K562 (cell line): ENCODE measurements at regions of chr11 and their contacts with region 1.

Region 1: DNA sequence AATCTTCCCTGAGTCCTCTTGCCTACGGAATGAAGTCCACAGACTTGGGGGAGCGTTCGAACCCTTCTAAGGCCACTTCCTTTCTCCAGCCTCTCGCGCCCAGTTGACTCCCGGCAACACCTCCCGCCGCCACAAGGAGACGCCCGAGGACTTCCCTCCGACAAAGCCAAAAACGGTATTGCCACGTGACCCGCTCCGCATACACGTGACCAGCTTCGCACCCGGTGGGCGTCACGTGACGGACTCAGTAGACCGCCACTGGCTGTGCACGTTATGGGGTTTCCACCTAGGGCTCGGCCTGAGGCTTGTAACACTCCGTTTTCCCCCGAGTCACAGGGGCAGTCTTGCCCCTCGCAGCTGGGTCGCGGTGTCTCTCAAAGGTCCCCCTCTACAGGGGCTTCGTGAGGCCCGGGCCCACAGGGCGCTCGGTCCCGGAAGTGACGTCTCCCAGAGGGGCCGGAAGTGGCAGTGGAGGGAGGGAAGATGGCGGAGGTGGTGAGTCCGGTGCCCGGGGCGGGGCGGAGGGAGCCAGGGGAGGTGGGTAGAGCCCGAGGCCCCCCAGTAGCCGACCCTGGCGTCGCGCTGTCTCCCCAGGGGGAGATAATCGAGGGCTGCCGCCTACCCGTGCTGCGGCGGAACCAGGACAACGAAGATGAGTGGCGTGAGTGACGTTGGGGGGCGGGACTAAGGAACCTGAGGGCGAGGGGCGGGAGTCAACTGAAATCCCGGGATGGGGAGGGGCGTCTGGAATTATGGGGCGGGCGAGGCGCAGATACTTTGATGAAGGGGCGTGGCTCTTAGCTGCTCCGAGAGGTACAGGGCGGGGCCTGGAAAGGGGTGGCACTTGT is at the start of gene KAT5:
- DNase-seq: peak; percentile 93 to 99 (median 95)
- ATAC-seq: peak; percentile 93
- H3K4me3 ChIP-seq: peak within 1 kb of the TSS; percentile 59
- H3K27ac ChIP-seq: peak within 1 kb of the TSS; percentile 98
- H3K4me1 ChIP-seq: peaks cover 17 to 28% of the 10 kb centered on the region in 2 experiments
- H3K27me3 ChIP-seq: no peaks in the 10 kb centered on the region
- CTCF ChIP-seq: peak; percentile 97 to 99 (median 98)
- EP300 ChIP-seq: 0 out of 2 replicates have a peak, but pooled peaks have one; percentile 34
- POLR2A ChIP-seq: peak; percentile 93
- RAD21 ChIP-seq: peak; percentile 96 to 97
- polyA plus RNA-seq, gene KAT5: 3.6 to 12.9 TPM

Region 2: DNA sequence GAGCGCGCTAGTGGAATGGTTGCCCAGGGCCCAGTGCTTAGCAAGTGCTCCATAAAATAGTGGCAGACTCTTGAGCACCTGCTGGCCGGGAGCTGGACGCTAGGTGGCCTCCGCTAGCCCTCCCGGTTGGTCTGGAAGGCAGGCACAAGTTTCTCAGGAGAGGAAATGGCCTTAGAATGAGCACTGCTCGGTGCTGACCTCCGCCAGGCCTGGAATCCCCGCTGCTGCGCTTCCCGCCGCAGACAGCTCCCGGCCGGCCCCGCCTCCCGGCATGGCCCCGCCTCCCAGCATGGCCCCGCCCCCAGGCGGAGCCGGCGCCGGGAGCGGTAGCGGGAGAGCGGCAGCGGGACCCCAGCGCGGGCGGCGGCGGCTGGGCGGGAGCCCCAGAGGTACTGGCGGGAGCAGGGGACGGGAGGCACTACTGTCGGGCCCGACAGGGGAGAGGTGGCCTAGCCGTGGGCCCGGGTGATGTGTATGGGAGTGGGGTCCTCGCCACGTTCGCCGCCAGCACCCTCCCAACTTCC is 74.2 kb before region 1 on chr11 and contains the start of gene SIPA1:
- CTCF ChIA-PET with region 1: no interaction called
- POLR2A ChIA-PET with region 1: interaction called, 6 read pairs
- in situ Hi-C with region 1: no loop called
- intact Hi-C with region 1: loop called (anchors 5 kb)
- DNase-seq: peak; percentile 84 to 93 (median 87)
- ATAC-seq: peak; percentile 87
- H3K4me3 ChIP-seq: peak within 1 kb of the TSS; percentile 85
- H3K27ac ChIP-seq: peak within 1 kb of the TSS; percentile 93
- H3K4me1 ChIP-seq: peaks cover 32 to 95% of the 10 kb centered on the region in 2 experiments
- H3K27me3 ChIP-seq: no peaks in the 10 kb centered on the region
- CTCF ChIP-seq: peak; percentile 69 to 74 (median 71)
- EP300 ChIP-seq: 0 out of 2 replicates have a peak, but pooled peaks have one; percentile 5
- POLR2A ChIP-seq: peak; percentile 84; the same call in 1 of the 2 replicates
- RAD21 ChIP-seq: peak; percentile 19 to 67
- polyA plus RNA-seq, gene SIPA1: 0.25 to 1.4 TPM

Region 3: DNA sequence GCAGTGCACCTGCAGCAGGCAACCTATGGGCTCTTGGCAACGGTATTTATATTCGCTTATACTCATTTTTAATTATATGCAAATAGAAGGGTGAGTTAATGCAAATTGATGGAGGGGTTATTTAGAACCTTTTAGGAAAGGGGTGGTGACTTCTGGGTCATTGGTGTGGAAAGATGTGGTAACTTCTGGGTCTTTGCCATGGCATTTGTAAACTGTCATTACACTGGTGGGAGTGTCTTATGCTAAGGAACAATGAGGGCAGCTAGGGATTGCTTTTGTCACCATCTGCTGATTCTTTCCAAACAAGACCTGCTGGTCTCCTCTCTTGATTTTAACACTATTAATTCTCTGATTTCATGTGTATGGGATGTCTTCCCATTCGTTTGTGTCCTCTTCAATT is 11.6 kb before region 1 on chr11:
- CTCF ChIA-PET with region 1: no interaction called
- POLR2A ChIA-PET with region 1: no interaction called
- in situ Hi-C with region 1: no loop called
- intact Hi-C with region 1: no loop called
- DNase-seq: no peak
- ATAC-seq: no peak
- H3K4me3 ChIP-seq: no peak overlapping the region
- H3K27ac ChIP-seq: no peak overlapping the region
- H3K4me1 ChIP-seq: peaks cover 0 to 10% of the 10 kb centered on the region in 2 experiments; a peak in 2 of 5 replicates
- H3K27me3 ChIP-seq: peaks cover 0 to 2% of the 10 kb centered on the region in 2 experiments; a peak in 2 of 5 replicates
- CTCF ChIP-seq: peak in 1 of 3 experiments; percentile 11; a peak in 1 of 6 replicates
- EP300 ChIP-seq: no peak
- POLR2A ChIP-seq: no peak
- RAD21 ChIP-seq: no peak; a peak in 1 of 4 replicates

Region 4: DNA sequence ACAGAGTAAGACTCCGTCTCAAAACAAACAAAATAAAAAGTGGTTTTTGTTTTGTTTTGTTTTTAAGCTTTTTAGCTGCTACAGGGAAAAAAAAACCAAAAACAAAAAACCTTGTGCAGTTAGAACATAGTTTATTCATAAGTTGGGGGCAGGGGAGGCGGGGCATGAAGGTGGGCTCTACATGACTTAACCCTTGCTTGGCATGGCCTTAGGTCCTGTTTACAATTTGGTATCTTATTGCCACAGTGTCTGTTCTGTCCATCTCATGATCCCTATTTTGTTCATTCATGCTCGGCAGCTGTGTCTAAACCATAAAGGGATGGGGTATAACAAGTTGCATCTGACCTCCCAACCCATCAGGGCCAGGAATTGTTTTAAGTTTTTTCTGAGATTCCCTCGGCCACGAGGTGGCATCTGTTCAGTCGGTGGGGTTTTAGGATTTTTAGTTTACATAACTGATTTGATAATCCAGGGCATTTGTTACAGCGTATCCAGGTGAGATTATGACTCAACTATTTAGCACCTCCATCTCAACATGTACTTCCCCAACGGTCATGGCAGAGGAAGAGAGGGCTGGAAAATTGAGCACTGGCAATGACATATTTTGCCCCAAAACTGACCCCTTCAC is 61.9 kb after region 1 on chr11:
- CTCF ChIA-PET with region 1: no interaction called
- POLR2A ChIA-PET with region 1: interaction called, 4 read pairs
- in situ Hi-C with region 1: no loop called
- intact Hi-C with region 1: loop called (anchors 5 kb)
- DNase-seq: no peak
- ATAC-seq: no peak
- H3K4me3 ChIP-seq: no peak overlapping the region
- H3K27ac ChIP-seq: no peak overlapping the region
- H3K4me1 ChIP-seq: peaks cover 0 to 14% of the 10 kb centered on the region in 2 experiments; a peak in 2 of 5 replicates
- H3K27me3 ChIP-seq: no peaks in the 10 kb centered on the region
- CTCF ChIP-seq: peak in 2 of 3 experiments; percentile 2 to 14; a peak in 1 of 6 replicates
- EP300 ChIP-seq: no peak
- POLR2A ChIP-seq: no peak
- RAD21 ChIP-seq: no peak

Region 5: DNA sequence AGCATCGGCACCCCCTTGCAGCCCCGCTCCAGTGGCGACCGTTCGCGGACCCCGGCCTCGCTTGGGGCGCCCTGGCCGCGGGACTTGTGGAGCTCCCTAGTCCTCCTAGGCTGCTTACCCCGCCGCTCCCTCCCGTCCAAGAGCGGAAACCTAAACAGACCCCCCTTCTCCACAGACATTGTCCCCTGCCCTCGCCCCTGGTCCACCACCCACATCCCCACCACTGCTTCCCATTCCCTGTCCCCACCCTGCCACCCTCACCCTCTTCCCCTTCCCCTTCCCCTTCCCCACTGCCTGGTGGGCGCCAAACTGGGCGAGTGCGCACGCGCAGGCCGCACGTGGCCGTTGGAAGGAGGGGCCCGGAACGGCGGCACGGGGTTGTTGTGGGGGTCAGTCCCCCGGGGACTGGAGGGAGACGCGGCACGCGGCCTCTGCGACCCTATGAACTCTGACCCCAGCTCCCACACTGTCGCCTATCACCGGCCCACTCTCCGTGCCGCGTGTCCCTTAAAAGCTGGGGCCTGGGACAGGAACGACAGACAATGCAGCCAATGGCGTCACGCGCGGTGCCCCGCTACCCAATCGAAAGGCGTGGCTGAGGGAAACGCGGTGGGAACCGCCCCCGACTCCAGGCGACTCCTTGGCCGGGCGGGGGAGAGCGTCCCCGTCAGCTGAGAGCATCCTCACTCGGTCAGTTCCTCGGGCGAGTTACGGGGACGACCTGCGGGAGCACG is 121.5 kb after region 1 on chr11 and contains the start of gene SNX32:
- CTCF ChIA-PET with region 1: no interaction called
- POLR2A ChIA-PET with region 1: no interaction called
- in situ Hi-C with region 1: no loop called
- intact Hi-C with region 1: no loop called
- DNase-seq: peak; percentile 83 to 96 (median 94)
- ATAC-seq: peak; percentile 100
- H3K4me3 ChIP-seq: no peak within 1 kb of the TSS
- H3K27ac ChIP-seq: no peak within 1 kb of the TSS
- H3K4me1 ChIP-seq: peaks cover 0 to 16% of the 10 kb centered on the region in 2 experiments; a peak in 2 of 5 replicates
- H3K27me3 ChIP-seq: peaks cover 4 to 24% of the 10 kb centered on the region in 2 experiments; a peak in 4 of 5 replicates
- CTCF ChIP-seq: no peak
- EP300 ChIP-seq: no peak
- POLR2A ChIP-seq: no peak
- RAD21 ChIP-seq: no peak
- polyA plus RNA-seq, gene SNX32: 0.03 TPM

Region 6: DNA sequence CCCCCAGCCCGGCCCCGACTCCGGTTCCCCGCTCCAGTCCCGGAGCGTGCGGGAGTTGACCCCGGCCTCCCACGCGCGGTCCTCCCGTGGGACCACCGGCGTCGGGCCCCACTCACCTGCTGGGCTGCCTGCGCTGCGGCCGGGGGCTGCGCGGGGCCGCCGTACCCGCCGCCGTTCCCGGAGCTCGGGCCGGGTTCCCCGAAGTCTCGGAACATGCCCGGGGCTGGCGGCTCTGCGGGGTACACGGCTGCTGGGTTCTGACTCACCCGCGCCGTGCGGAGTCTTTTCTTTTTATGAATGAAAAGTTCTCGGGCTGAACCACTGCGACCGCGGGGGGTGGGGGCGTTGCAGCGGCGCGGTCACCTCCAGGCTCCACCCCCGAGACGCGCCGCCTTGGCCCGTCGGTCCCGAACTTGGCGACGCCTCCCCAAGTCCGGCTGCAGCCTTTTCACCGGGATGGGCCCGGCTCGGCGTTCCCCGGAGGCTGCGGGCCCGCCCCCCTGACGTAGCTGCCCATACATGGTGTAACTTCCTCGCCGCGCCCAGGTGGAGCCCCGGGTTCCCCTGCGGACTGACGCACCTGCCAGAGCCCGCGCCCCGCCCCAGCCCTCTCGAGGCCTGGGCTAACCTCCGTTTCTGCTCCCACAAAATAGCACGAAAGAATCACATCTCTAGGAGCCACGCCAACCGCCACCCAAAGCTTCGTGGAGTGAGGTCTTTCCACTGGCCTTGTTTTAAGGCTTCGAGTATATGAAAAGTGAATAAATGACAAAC is 188.3 kb after region 1 on chr11 and contains the start of gene FOSL1:
- CTCF ChIA-PET with region 1: no interaction called
- POLR2A ChIA-PET with region 1: interaction called, 10 read pairs
- in situ Hi-C with region 1: no loop called
- intact Hi-C with region 1: no loop called
- DNase-seq: peak; percentile 89 to 97 (median 92)
- ATAC-seq: peak; percentile 90
- H3K4me3 ChIP-seq: peak within 1 kb of the TSS; percentile 89
- H3K27ac ChIP-seq: peak within 1 kb of the TSS; percentile 100
- H3K4me1 ChIP-seq: peaks cover 42 to 70% of the 10 kb centered on the region in 2 experiments
- H3K27me3 ChIP-seq: no peaks in the 10 kb centered on the region
- CTCF ChIP-seq: no peak
- EP300 ChIP-seq: peak; percentile 39; the same call in 1 of the 2 replicates
- POLR2A ChIP-seq: peak; percentile 97
- RAD21 ChIP-seq: 0 out of 4 replicates have a peak, but pooled peaks of 1 of the 2 experiments have one; percentile 7
- polyA plus RNA-seq, gene FOSL1: 3.5 to 4.2 TPM

Region 7: DNA sequence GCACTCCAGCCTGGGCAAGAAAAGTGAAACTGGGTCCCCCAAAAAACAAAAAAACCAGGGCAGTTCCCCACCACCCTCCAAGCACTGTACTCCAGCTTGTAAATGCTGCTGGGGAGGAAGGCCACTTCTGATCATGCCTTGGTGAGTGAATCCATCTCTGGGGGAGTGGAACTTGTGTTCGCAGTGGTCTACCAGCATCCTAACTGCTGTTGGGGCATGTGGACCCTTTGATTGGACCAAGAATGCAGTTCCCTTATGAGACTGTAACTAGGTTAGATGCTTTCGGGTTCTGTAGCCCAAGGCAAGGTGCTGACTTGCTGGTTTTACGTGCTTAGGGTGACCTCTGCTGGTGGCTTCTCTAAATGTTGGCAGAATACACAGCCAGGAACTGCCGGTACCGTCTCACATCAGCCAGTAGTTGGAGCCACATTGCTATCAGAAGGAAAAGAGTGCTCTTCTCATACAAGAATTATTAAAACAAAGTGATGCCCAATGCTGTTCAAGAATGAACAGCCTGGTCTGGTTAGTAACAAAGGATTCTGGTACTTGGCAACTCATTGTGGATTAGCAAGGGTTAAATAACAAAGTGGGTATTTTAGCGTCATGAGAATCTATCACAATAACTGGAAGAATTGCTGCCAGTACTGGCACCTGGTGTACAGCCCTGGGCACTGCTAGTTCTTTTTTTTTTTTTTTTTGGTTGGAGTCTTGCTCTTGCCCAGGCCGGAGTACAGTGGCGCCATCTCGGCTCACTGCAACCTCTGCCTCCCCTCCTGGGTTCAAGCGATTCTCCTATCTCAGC is 277.0 kb after region 1 on chr11:
- CTCF ChIA-PET with region 1: interaction called, 19 read pairs
- POLR2A ChIA-PET with region 1: interaction called, 3 read pairs
- in situ Hi-C with region 1: loop called (anchors 10 kb)
- intact Hi-C with region 1: loop called (anchors 1 kb)
- DNase-seq: peak; percentile 75 to 96 (median 82)
- ATAC-seq: peak; percentile 100
- H3K4me3 ChIP-seq: no peak overlapping the region
- H3K27ac ChIP-seq: no peak overlapping the region
- H3K4me1 ChIP-seq: 0 out of 5 replicates have a peak, but pooled peaks cover 0 to 3% of the 10 kb centered on the region in 2 experiments
- H3K27me3 ChIP-seq: no peaks in the 10 kb centered on the region
- CTCF ChIP-seq: peak; percentile 99 to 100 (median 99)
- EP300 ChIP-seq: peak; percentile 29; the same call in 1 of the 2 replicates
- POLR2A ChIP-seq: no peak
- RAD21 ChIP-seq: peak; percentile 99

Region 8: DNA sequence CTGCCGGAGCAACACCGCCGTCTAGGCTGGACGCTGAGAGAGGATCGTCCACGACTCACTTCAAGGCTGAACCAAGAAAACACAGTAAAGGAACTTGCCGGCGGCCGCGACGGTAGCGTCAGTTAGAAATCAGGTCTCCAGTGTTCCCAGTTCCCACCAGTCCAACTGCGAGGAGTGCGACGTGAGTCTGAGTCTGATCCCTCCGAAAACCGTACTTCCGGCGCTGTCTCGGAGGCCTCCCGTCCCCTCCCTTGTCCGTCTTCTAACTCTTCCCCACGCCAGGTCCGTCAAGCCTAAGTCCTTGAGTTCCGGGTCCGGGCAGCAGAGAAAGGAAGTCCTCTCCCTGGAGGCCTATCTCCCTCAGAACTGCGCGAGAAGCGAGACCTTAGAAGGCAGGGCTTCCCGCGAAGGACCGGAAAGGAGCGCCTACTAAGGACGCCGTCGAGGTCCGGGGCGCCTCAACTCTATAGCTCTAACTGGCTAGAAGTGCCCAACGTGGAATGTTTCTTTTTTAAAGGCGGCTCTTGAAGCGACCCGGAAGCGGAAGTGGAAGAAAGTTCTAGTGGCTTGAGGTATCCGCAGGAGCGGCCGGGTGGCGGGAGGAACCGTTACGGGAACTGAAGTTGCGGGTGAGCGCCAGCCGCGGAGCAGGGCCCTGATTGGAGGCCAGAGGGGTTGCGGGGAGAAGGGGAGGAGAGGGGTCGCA is 290.1 kb after region 1 on chr11 and contains the starts of genes BANF1 and EIF1AD:
- CTCF ChIA-PET with region 1: no interaction called
- POLR2A ChIA-PET with region 1: interaction called, 3 read pairs
- in situ Hi-C with region 1: loop called (anchors 10 kb)
- intact Hi-C with region 1: no loop called
- DNase-seq: peak; percentile 82 to 99 (median 88)
- ATAC-seq: peak; percentile 86
- H3K4me3 ChIP-seq: peak within 1 kb of the TSS; percentile 95
- H3K27ac ChIP-seq: peak within 1 kb of the TSS; percentile 99
- H3K4me1 ChIP-seq: peaks cover 20 to 22% of the 10 kb centered on the region in 2 experiments; a peak in 4 of 5 replicates
- H3K27me3 ChIP-seq: no peaks in the 10 kb centered on the region
- CTCF ChIP-seq: peak in 1 of 3 experiments; percentile 3; a peak in 1 of 6 replicates
- EP300 ChIP-seq: peak; percentile 64
- POLR2A ChIP-seq: peak; percentile 91
- RAD21 ChIP-seq: peak; percentile 2 to 10; a peak in 1 of 4 replicates
- polyA plus RNA-seq, gene BANF1: 631 to 651 TPM
- polyA plus RNA-seq, gene EIF1AD: 66.9 to 98.8 TPM